Left lung (tissue), 14 donors: ENCODE measurements at regions of chr17 and their contacts with region 1.

Region 1: GRCh38 chr17:49575579-49576087 is at the start of gene NXPH3:
- DNase-seq: peak in 3 of 4 donors; percentile 37 to 95 (median 65)
- ATAC-seq: peak; percentile 85
- H3K4me3 ChIP-seq: peak within 1 kb of the TSS; percentile 52 to 53
- H3K27ac ChIP-seq: peak within 1 kb of the TSS; percentile 13 to 48
- H3K4me1 ChIP-seq: peaks cover 8 to 38% of the 10 kb centered on the region in 2 donors
- H3K27me3 ChIP-seq: peaks cover 0 to 46% of the 10 kb centered on the region in 2 donors
- CTCF ChIP-seq: peak; percentile 44 to 65
- polyA plus RNA-seq, gene NXPH3: 1.0 to 1.4 (median 1.2) TPM

Region 2: DNA sequence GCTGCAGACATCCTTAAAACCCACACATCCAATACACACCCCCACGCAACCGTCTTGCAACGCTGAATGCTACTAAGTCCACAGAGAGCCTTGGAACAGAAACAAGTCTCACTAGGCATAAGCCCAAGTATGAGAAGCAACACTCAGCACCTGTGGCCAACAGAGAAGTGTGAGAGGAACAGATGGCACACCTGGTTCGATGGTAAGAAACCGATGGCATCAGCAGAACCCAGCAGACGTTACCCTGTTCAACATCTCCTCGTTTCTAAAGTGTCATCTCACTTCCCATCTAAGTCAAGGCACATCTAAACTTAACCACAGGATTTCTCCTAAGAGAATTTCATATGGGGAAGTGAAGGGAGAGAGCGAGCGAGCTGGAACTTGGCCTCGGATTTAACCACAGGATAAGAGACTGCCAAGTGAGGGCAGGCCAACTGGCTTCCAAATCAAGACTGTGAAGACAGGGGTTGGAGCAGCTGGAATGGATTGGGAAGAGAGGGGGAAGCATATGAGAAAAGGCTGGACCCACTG is 41.0 kb after region 1 on chr17:
- intact Hi-C with region 1: no loop called
- DNase-seq: peak in 3 of 4 donors; percentile 29 to 60 (median 57)
- ATAC-seq: peak; percentile 69
- H3K4me3 ChIP-seq: no peak overlapping the region
- H3K27ac ChIP-seq: peak overlapping the region in 1 of 2 donors; percentile 30
- H3K4me1 ChIP-seq: peaks cover 20 to 33% of the 10 kb centered on the region in 2 donors
- H3K27me3 ChIP-seq: no peaks in the 10 kb centered on the region
- CTCF ChIP-seq: no peak

Region 3: GRCh38 chr17:49694847-49695683 is 119.4 kb after region 1 on chr17:
- intact Hi-C with region 1: loop called (anchors 2 to 10 kb)
- DNase-seq: peak in 1 of 4 donors; percentile 41
- ATAC-seq: peak; percentile 86
- H3K4me3 ChIP-seq: no peak overlapping the region
- H3K27ac ChIP-seq: no peak overlapping the region
- H3K4me1 ChIP-seq: peaks cover 4 to 12% of the 10 kb centered on the region in 2 donors
- H3K27me3 ChIP-seq: no peaks in the 10 kb centered on the region
- CTCF ChIP-seq: peak; percentile 93 to 94

Region 4: DNA sequence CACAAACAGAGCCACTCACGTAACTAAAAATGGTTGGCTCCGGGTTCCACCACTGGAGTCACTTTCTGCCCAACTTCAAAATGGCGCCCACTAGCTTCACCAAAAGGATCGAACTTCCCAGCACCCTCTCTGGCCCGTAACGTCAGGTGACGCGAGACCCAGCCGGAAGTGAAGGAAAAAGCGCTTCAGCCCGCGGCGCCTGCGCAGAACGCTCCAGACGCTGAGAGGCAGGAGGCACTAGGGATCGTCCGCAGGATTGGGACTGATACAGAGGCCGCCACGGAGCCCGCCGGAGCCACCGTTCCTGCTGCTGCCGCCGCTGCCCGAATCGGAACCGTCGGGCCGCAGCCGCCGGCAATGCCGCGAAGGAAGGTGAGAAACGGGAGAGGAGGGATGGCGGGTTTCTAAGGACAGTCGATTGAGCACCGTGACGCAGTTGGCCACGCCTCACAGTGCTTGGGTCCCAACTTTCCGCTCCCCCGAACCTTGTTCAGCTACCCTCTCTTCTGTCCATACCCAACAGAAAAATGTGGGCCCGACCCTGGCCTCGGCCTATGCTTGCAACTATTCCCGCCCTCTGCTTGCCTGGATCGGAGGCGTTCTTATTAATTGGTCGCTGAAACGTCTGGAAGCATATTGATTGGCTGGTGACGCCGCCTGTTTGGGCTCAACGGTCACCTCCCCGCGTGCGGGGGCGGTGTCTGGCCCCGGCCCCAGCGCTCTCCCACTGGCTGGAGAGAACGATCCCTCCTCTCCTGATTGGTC is 213.0 kb after region 1 on chr17 and contains the start of gene KAT7:
- intact Hi-C with region 1: loop called in 1 of 2 experiments (anchors 10 kb)
- DNase-seq: peak; percentile 97 to 100 (median 98)
- ATAC-seq: peak; percentile 96
- H3K4me3 ChIP-seq: peak within 1 kb of the TSS; percentile 95 to 96
- H3K27ac ChIP-seq: peak within 1 kb of the TSS; percentile 100
- H3K4me1 ChIP-seq: peaks cover 13 to 32% of the 10 kb centered on the region in 2 donors
- H3K27me3 ChIP-seq: no peaks in the 10 kb centered on the region
- CTCF ChIP-seq: no peak
- polyA plus RNA-seq, gene KAT7: 44.1 to 56.7 (median 50.5) TPM

Region 5: GRCh38 chr17:49851387-49852291 is 276.0 kb after region 1 on chr17:
- intact Hi-C with region 1: loop called in 1 of 2 experiments (anchors 10 kb)
- DNase-seq: peak; percentile 57 to 89 (median 73)
- ATAC-seq: peak; percentile 84
- H3K4me3 ChIP-seq: peak overlapping the region; percentile 35 to 50
- H3K27ac ChIP-seq: peak overlapping the region in 1 of 2 donors; percentile 57
- H3K4me1 ChIP-seq: peaks cover 4 to 19% of the 10 kb centered on the region in 2 donors
- H3K27me3 ChIP-seq: peaks cover 0 to 20% of the 10 kb centered on the region in 2 donors
- CTCF ChIP-seq: peak; percentile 49 to 66

Region 6: DNA sequence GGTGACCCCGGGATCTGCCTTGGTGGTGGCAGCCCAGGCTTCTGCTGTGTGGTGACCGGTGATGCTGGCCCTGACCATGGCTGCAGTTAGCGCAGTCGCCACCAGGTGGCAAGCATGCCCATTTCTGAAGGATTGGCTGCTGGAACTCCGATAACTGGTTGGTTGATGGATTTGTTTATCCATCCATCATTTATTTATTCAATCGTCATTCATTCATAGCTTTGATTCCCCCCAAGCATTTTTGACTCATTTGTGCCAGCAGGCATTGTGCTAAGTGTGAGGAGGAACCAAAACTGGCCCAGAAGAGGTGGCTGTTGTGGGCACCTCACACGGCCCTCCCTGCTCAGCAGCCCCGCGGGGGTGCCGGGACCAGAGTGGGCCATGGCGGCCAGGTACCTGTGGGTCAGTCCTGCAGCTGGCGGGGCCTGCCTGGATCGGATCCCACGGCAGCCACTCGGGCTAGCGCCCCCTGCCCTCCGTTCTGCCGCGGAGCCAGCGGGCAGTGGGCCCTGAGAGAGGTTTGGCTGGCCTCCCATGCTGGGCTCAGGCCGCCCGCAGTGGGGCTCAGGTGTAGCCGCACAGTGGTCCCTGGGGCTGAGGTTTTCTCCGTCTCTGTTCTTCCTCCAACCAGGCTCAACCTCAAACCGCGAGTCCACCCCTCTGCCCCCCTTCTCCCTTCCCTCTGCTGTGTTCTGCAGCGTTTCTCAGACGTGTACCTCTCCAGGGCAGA is 451.4 kb after region 1 on chr17:
- intact Hi-C with region 1: no loop called
- DNase-seq: peak; percentile 70 to 93 (median 82)
- ATAC-seq: peak; percentile 93
- H3K4me3 ChIP-seq: peak overlapping the region; percentile 16 to 24
- H3K27ac ChIP-seq: peak overlapping the region; percentile 44 to 61
- H3K4me1 ChIP-seq: peaks cover 14 to 21% of the 10 kb centered on the region in 2 donors
- H3K27me3 ChIP-seq: peaks cover 0 to 17% of the 10 kb centered on the region in 2 donors
- CTCF ChIP-seq: peak; percentile 96 to 99